Posterior vena cava (tissue), 2 donors: ENCODE measurements at regions of chr13 and their contacts with region 1.

Region 1: GRCh38 chr13:30685320-30685859 is 50.0 kb upstream of the ALOX5AP start:
- DNase-seq: no peak

Region 2: DNA sequence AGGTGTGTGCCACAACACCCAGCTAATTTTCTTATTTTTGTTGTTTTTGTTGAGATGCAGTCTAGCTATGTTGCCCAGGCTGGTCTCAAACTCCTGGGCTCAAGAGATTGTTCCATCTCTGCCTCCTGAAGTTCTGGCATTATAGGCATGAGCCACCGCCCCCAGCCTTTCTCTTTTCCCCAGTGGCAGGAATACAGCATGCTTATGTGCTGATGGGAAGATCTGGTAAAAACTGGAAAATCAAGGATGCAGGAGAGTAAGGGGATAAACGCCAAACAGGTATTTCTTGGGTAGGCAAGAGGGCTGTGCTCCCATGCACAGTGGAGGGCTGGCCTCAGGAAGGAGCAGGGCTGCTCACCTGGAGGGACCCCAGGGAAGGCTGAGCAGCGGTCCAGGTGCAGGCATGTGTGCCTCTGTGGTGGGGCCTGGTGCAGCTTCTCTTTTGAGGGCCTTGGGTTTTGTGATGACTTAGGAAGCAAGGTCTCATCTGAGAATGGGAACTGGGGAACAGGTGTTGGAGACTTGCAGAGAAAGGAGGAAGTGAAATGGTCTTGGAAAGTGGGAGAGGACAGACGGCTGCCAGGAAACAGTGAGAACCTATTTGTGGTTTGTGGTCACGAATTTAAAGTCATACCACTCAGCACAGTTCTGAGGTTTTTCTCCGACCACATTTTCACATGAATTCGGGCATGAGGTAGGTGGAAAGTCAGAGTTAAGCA is 353.6 kb after region 1 on chr13:
- intact Hi-C with region 1: loop called in 1 of 2 experiments (anchors 5 kb)
- DNase-seq: no peak